Activated CD4-positive, alpha-beta memory T cell treated with anti-CD3 and anti-CD28 coated beads for 36 hours (primary cell): ENCODE measurements at regions of chr15 and their contacts with region 1.

Region 1: DNA sequence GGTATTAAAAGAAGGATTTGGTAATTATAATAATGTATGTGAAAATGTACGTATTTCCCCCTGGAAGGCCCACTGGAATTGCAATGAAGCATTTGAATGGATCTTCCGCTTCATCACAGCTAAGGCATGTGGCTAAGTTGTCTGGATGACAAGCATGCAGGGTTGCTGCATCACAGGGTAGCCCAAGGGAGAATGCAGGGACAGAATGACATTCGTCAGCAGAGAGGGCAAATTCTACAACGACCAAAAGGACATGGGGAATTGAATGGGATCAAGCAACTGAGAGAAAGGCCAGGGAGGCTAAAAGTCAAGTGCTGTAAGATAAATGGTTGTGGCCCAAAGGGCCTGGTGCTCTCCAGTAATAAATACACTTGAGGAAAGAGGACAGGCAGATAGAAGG is 95.4 kb downstream of the ISL2 start:
- DNase-seq: no peak
- H3K4me3 Mint-ChIP-seq: no peak overlapping the region
- H3K27ac Mint-ChIP-seq: no peak overlapping the region
- H3K4me1 Mint-ChIP-seq: no peaks in the 10 kb centered on the region
- H3K27me3 Mint-ChIP-seq: no peaks in the 10 kb centered on the region

Region 2: DNA sequence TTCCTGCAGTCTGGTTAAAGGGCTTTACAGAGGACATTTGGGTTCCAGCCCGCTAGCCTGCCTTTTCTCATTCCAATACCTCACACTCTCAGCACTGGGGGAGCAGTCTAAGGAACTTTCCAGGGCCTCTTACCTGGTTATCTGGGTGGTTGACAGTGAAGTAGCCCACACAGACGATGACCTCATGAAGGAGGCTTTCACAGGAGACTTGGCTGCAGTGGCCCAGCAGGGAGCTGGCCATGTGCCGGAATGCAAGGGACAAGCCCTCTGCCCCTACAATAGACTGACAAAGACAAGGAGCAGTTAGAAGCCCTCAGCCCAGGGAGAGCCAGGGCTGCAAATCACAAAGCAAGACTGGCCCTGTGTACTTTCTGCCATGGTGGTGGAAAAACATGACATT is 55.9 kb before region 1 on chr15:
- CTCF ChIA-PET with region 1: no interaction called
- POLR2A ChIA-PET with region 1: no interaction called
- intact Hi-C with region 1: loop called (anchors 10 kb)
- DNase-seq: no peak
- H3K4me3 Mint-ChIP-seq: no peak overlapping the region
- H3K27ac Mint-ChIP-seq: no peak overlapping the region
- H3K4me1 Mint-ChIP-seq: no peaks in the 10 kb centered on the region
- H3K27me3 Mint-ChIP-seq: no peaks in the 10 kb centered on the region